Colonic mucosa (tissue), 4 donors: ENCODE measurements at regions of chr19 and their contacts with region 1.

Region 1: DNA sequence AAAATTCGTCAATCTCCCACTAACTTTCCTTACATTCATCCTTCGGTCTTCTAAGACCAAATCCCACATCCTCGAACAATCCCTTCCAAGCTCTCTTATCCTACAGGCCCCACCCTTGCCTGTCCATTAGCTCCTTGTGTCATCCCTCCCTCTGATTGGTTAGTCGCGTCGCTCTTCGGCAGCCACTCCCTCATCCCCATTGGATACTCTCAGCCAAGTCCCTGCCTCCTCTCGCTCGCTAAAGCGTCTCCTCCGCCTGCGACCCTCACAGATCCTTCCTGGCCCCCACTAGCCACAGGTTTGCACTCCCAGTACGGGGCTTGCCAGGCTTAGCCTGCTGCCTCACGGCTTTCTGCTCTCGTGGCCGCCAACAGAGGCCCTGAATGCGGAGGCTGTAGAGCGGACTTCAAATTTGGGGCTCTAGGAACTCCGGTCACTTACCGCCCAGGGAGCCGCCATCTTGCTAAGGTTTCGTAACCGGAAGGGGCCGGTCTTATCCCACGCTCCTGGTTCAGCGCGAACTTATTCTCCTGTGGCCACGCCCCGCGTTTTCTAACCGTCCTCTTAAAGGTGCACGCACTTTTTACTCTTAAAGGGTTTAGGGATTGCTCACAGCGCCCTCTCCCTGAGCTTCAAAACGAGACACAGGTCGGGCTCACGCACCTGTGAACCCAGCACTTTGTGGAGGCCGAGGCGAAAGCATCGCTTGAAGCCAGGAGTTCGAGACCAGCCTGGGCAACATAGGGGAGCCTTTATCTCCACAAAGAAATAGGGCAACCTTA is at the start of gene DMAC2:
- DNase-seq: peak; percentile 99
- H3K4me3 ChIP-seq: peak within 1 kb of the TSS; percentile 65
- H3K27ac ChIP-seq: peak within 1 kb of the TSS; percentile 91
- H3K4me1 ChIP-seq: peaks cover 3% of the 10 kb centered on the region
- H3K27me3 ChIP-seq: no peaks in the 10 kb centered on the region
- CTCF ChIP-seq: peak; percentile 26
- total RNA-seq, gene DMAC2: 48.0 to 61.8 TPM

Region 2: DNA sequence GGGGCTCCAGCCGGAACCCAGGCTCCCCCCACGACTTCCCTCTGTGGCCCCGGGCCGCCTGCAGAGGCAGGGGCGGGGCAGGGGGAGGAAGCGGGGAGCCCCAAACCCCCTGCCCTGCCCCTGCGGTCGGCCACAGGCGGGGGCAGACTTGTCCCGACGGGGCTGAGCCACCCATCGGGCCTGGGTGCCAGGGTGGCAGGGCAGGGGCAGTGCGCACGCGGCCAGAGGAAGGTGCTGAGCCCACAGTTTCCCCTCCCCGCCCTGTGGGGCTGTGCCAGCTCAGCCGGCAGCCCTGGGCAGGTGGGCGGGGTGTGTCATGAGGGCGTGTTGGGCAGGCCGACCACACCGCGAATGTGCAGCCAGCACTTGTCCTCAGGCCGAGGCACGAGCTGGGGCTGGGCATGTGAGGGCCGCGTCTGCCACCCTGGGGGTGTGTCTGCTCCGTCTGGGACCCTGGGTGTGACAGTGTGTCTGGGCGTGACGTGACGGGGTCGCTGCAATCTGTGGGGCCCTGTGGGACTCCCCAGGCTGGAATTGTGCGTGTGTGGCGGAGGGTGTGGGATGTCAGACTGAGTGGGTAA is 112.0 kb before region 1 on chr19:
- intact Hi-C with region 1: loop called (anchors 10 kb)
- DNase-seq: peak; percentile 81
- H3K4me3 ChIP-seq: peak overlapping the region; percentile 30
- H3K27ac ChIP-seq: peak overlapping the region; percentile 67
- H3K4me1 ChIP-seq: peaks cover 29% of the 10 kb centered on the region
- H3K27me3 ChIP-seq: no peaks in the 10 kb centered on the region
- CTCF ChIP-seq: no peak

Region 3: GRCh38 chr19:41341669-41342490 is 97.8 kb before region 1 on chr19:
- intact Hi-C with region 1: loop called (anchors 10 kb)
- DNase-seq: peak; percentile 32
- H3K4me3 ChIP-seq: no peak overlapping the region
- H3K27ac ChIP-seq: no peak overlapping the region
- H3K4me1 ChIP-seq: no peaks in the 10 kb centered on the region
- H3K27me3 ChIP-seq: no peaks in the 10 kb centered on the region
- CTCF ChIP-seq: peak; percentile 21